ENCODE measurements at regions of chr10 and their contacts with region 1.

Region 1: DNA sequence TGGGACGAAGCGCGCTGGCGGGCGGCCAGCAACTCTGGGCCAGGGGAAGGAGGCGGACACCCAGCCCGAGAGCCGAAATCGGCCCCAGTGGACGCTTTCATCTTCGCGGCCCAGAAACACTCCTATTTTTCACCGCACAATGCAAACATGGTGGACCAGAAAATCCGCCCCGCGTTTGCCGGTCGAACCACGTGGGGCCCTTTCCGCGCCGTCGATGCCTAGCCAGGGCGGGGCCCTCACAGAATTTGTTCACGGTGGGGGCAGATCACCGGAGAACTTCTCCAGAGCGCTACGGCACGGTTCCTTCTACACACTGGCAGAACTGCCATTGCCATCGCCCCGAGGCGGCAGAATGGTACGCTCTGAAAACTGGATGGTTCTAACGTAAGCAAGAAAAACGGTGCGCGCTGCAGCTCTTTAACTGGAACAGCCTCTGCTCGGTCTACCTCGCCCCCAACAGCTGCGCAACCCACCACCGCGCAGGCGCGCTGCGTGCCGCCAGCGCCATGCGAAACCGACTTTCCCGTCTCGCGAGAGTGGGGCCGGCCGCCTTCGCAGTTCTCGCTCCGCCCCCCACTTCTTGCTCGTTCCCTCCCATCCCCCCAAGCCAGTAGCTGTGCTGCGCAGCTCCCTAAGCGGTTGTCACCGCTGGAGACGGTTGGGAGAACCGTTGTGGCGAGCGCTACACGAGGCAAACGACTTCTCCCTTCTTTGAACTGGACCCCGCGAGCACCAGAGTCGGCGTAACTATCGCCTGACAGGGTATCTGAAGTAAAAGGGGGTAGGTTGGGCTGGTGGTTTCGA is at the start of gene HNRNPH3:
- DNase-seq: peak; percentile 97 to 99 (median 99)
- ATAC-seq: peak; percentile 86
- H3K4me3 ChIP-seq: peak within 1 kb of the TSS; percentile 92
- H3K4me3 Mint-ChIP-seq: peak within 1 kb of the TSS; percentile 94 to 100 (median 100)
- H3K27ac ChIP-seq: peak within 1 kb of the TSS; percentile 99
- H3K27ac Mint-ChIP-seq: peak within 1 kb of the TSS; percentile 98 to 100 (median 100)
- H3K4me1 ChIP-seq: peaks cover 15 to 21% of the 10 kb centered on the region in 2 donors
- H3K4me1 Mint-ChIP-seq: peaks cover 40 to 65% (median 53%) of the 10 kb centered on the region in 7 donors
- H3K27me3 ChIP-seq: no peaks in the 10 kb centered on the region
- H3K27me3 Mint-ChIP-seq: peaks cover 0 to 4% (median 0%) of the 10 kb centered on the region in 5 donors
- total RNA-seq, gene HNRNPH3: 125 to 190 (median 156) TPM

Region 2: DNA sequence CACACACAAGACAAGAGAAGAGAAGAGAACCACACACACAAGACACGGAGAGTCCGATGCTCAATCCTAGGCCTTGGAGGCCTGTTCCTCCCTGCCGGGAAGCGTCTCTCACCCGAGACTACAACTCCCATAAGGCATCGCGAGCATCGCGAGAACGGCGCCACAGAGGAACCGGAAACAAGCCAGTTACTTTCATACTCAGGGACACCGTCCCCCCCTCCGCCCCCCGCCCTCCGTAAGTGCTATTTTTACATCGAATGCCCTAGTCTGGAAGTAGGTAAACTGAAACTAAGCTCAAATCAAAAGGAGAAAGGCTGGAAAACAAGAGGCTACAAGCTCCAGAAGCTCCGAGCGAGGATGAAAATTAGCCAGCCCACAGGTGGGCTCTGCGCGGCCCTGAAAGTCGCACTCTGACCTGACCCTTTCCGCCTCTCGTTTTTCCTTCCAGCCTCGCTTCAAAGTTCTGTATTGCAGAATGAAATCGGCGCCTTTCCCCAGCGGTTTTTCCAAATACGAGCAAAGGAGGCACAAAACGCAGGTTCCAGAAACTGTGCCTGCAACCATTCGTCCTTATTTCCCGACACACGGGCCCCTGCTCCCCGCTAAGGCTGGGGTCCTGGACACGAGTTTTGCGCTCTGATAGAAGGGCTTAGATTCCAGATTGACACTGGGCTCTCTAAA is 482.2 kb before region 1 on chr10:
- CTCF ChIA-PET with region 1: no interaction called
- POLR2A ChIA-PET with region 1: interaction called, 5 read pairs
- intact Hi-C with region 1: loop called (anchors 1 kb)
- DNase-seq: peak; percentile 81 to 91 (median 89)
- ATAC-seq: peak; percentile 100
- H3K4me3 ChIP-seq: peak overlapping the region; percentile 79
- H3K4me3 Mint-ChIP-seq: peak overlapping the region; percentile 84 to 99 (median 96)
- H3K27ac ChIP-seq: peak overlapping the region; percentile 82
- H3K27ac Mint-ChIP-seq: peak overlapping the region; percentile 81 to 100 (median 97)
- H3K4me1 ChIP-seq: peaks cover 5 to 6% of the 10 kb centered on the region in 2 donors
- H3K4me1 Mint-ChIP-seq: peaks cover 5 to 12% (median 8%) of the 10 kb centered on the region in 7 donors
- H3K27me3 ChIP-seq: no peaks in the 10 kb centered on the region
- H3K27me3 Mint-ChIP-seq: no peaks in the 10 kb centered on the region

Region 3: GRCh38 chr10:68231106-68231816 is 100.4 kb before region 1 on chr10:
- CTCF ChIA-PET with region 1: no interaction called
- POLR2A ChIA-PET with region 1: interaction called, 3 read pairs
- intact Hi-C with region 1: loop called in 1 of 2 experiments (anchors 5 kb)
- DNase-seq: peak in 7 of 9 donors; percentile 2 to 66 (median 10)
- ATAC-seq: peak; percentile 70
- H3K4me3 ChIP-seq: peak overlapping the region; percentile 59
- H3K4me3 Mint-ChIP-seq: peak overlapping the region; percentile 70 to 89 (median 83)
- H3K27ac ChIP-seq: no peak overlapping the region
- H3K27ac Mint-ChIP-seq: no peak overlapping the region
- H3K4me1 ChIP-seq: no peaks in the 10 kb centered on the region
- H3K4me1 Mint-ChIP-seq: peaks cover 0 to 13% (median 8%) of the 10 kb centered on the region in 7 donors
- H3K27me3 ChIP-seq: no peaks in the 10 kb centered on the region
- H3K27me3 Mint-ChIP-seq: peaks cover 27 to 63% (median 44%) of the 10 kb centered on the region in 5 donors

Region 4: DNA sequence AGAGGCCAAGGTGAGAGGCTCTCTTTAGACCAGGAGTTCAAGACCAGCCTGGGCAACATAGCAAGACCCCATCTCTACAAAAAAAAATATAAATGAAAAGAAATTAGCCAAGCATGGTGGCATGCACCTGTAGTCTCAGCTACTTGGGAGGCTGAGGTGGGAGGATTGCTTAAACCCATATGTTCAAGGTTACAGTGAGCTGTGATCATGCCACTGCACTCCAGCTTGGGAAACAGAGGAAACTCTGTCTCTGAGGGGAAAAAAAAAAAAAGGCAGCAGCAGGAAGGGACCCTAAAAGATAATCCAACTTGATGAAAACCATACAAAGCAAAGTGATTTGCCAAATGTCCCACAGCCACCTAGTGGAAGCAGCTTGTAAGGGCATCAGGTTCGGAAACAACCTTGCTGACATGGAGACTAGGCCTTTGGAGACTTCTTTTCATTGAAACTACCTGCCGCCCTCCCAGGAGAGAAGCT is 16.6 kb after region 1 on chr10:
- CTCF ChIA-PET with region 1: interaction called, 4 read pairs
- POLR2A ChIA-PET with region 1: interaction called, 28 read pairs
- intact Hi-C with region 1: loop called (anchors 1 to 2 kb)
- DNase-seq: peak in 8 of 9 donors; percentile 30 to 53 (median 44)
- ATAC-seq: peak; percentile 81
- H3K4me3 ChIP-seq: no peak overlapping the region
- H3K4me3 Mint-ChIP-seq: no peak overlapping the region
- H3K27ac ChIP-seq: peak overlapping the region; percentile 15
- H3K27ac Mint-ChIP-seq: peak overlapping the region in 8 of 9 donors; percentile 31 to 90 (median 81)
- H3K4me1 ChIP-seq: no peaks in the 10 kb centered on the region
- H3K4me1 Mint-ChIP-seq: peaks cover 0 to 13% (median 4%) of the 10 kb centered on the region in 7 donors
- H3K27me3 ChIP-seq: no peaks in the 10 kb centered on the region
- H3K27me3 Mint-ChIP-seq: no peaks in the 10 kb centered on the region

Region 5: DNA sequence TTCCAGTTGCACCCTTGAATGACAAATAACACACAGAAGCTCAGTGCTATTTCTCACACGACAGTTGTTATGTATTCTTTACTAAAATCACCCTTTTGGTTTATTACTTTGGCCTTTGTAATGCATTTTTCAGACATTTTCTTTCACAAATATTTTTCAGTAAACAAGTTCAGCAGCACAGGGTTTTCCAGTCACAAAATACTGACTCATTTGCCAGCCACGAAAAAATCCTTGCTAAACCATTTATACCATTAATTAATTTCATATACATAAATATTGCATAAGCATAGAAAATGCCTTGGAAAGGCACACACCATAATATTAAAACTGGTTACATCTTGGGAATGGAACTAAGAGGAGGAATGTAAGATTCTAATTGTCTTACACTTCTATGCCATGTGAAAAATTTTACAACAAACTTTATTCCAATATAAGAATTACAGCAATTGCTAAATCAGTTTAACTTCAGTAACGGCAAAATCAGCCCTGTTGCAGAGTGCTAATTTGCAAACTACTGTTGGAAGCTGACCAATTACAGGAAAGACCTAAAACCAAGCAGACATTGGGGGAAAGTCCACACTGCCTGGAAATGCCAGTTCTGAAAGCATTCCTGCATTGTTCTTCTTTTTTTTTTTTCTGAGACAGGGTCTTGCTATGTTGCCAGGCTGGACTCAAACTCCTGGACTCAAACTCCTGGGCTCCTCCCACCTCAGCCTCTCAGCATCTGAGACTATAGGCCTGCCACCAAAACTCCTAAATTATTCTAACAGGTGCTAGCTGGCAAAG is 32.6 kb after region 1 on chr10:
- CTCF ChIA-PET with region 1: no interaction called
- POLR2A ChIA-PET with region 1: no interaction called
- intact Hi-C with region 1: no loop called
- DNase-seq: no peak
- ATAC-seq: no peak
- H3K4me3 ChIP-seq: no peak overlapping the region
- H3K4me3 Mint-ChIP-seq: no peak overlapping the region
- H3K27ac ChIP-seq: no peak overlapping the region
- H3K27ac Mint-ChIP-seq: peak overlapping the region in 2 of 9 donors; percentile 9 to 12
- H3K4me1 ChIP-seq: no peaks in the 10 kb centered on the region
- H3K4me1 Mint-ChIP-seq: peaks cover 0 to 2% (median 0%) of the 10 kb centered on the region in 7 donors
- H3K27me3 ChIP-seq: no peaks in the 10 kb centered on the region
- H3K27me3 Mint-ChIP-seq: no peaks in the 10 kb centered on the region

Region 6: DNA sequence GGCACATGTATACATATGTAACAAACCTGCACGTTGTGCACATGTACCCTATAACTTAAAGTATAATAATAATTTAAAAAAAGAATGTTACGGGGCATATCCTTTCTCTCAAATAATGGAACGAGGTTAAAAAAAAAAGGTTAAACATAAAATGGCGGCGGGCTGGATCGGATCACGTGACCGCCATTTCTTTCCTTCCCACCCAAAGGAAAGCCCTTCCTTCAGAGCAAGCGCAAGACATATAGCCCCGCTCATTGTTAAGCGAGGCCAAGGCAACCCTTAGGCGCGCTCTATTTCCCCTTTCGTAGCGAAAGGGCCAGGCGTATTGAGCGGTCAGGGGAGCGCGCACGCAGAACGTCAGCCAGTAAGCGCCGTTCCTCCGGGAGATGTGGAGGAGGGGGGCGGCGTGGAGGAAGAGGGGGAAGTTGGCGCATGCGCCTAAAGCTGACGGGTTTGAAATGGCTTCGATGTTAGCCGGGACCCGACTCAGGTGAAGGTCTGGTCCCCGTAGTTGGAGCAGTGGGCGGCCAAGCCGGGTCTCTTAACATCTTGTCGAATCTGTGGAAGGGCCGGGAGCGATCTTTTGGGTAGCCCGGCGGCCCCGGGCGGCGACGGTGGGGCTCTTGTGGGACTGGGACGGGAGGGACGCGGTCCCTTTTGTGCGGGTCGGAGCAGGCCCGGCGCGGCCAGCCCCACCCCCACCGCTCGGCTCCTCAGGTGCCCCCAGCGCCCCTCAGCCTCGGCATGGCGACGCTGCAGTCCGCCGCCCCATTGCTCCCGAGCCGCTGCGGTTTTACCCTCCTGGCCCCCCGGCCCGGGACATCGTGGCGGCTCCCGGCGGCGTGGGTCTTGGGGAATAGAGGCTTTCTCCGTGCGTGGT is 389.4 kb after region 1 on chr10 and contains the start of gene CCAR1:
- CTCF ChIA-PET with region 1: no interaction called
- POLR2A ChIA-PET with region 1: interaction called, 6 read pairs
- intact Hi-C with region 1: loop called (anchors 1 kb)
- DNase-seq: peak; percentile 86 to 97 (median 96)
- ATAC-seq: peak; percentile 99
- H3K4me3 ChIP-seq: peak within 1 kb of the TSS; percentile 64
- H3K4me3 Mint-ChIP-seq: peak within 1 kb of the TSS; percentile 87 to 100 (median 96)
- H3K27ac ChIP-seq: peak within 1 kb of the TSS; percentile 96
- H3K27ac Mint-ChIP-seq: peak within 1 kb of the TSS; percentile 95 to 99 (median 98)
- H3K4me1 ChIP-seq: peaks cover 6 to 7% of the 10 kb centered on the region in 2 donors
- H3K4me1 Mint-ChIP-seq: peaks cover 10 to 23% (median 16%) of the 10 kb centered on the region in 7 donors
- H3K27me3 ChIP-seq: no peaks in the 10 kb centered on the region
- H3K27me3 Mint-ChIP-seq: peaks cover 0 to 2% (median 0%) of the 10 kb centered on the region in 5 donors
- total RNA-seq, gene CCAR1: 64.4 to 89.5 (median 88.2) TPM

Region 7: DNA sequence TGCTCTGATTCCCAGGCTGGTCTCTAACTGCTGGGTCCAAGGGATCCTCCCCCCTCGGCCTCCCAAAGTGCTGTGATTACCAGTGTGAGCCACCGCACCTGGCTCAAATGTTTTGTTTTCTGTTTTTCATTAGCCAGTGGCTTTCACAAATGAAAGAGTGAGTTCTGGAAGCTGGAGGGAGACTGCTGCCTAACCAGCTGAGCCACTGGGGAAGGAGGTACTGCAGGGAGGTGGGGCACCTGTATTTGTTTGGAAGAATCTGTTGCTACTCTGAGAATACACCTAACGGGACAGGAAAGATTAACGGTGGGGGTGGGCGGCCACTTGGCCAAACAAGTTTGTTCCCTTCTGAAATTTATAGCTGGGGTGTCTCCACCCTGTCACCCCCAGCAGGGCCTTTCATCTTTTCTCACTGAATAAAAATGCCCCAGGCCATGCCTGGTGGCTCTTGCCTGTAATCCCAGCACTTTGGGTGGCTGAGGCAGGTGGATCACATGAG is 500.4 kb after region 1 on chr10:
- CTCF ChIA-PET with region 1: no interaction called
- POLR2A ChIA-PET with region 1: no interaction called
- intact Hi-C with region 1: no loop called
- DNase-seq: no peak
- ATAC-seq: no peak
- H3K4me3 ChIP-seq: no peak overlapping the region
- H3K4me3 Mint-ChIP-seq: no peak overlapping the region
- H3K27ac ChIP-seq: no peak overlapping the region
- H3K27ac Mint-ChIP-seq: peak overlapping the region in 3 of 9 donors; percentile 7 to 53 (median 32)
- H3K4me1 ChIP-seq: peaks cover under 1 to 13% of the 10 kb centered on the region in 2 donors
- H3K4me1 Mint-ChIP-seq: peaks cover 0 to 22% (median 16%) of the 10 kb centered on the region in 7 donors
- H3K27me3 ChIP-seq: no peaks in the 10 kb centered on the region
- H3K27me3 Mint-ChIP-seq: peaks cover 0 to 27% (median 0%) of the 10 kb centered on the region in 5 donors

Region 8: GRCh38 chr10:69123747-69124562 is 792.3 kb after region 1 on chr10 and contains the start of gene VPS26A:
- CTCF ChIA-PET with region 1: no interaction called
- POLR2A ChIA-PET with region 1: no interaction called
- intact Hi-C with region 1: loop called (anchors 2 to 10 kb)
- DNase-seq: peak; percentile 97 to 100 (median 99)
- ATAC-seq: peak; percentile 99
- H3K4me3 ChIP-seq: peak within 1 kb of the TSS; percentile 85
- H3K4me3 Mint-ChIP-seq: peak within 1 kb of the TSS; percentile 93 to 99 (median 96)
- H3K27ac ChIP-seq: peak within 1 kb of the TSS; percentile 94
- H3K27ac Mint-ChIP-seq: peak within 1 kb of the TSS; percentile 92 to 98 (median 97)
- H3K4me1 ChIP-seq: peaks cover 8 to 16% of the 10 kb centered on the region in 2 donors
- H3K4me1 Mint-ChIP-seq: peaks cover 5 to 37% (median 35%) of the 10 kb centered on the region in 7 donors
- H3K27me3 ChIP-seq: no peaks in the 10 kb centered on the region
- H3K27me3 Mint-ChIP-seq: no peaks in the 10 kb centered on the region
- total RNA-seq, gene VPS26A: 25.5 to 35.0 (median 29.5) TPM

Measured in naive thymus-derived CD4-positive, alpha-beta T cell (primary cell).